T-cell (primary cell): ENCODE measurements at regions of chr7 and their contacts with region 1.

Region 1: GRCh38 chr7:24582166-24582565 is 8.9 kb downstream of the PALS2 start:
- DNase-seq: no peak
- ATAC-seq: no peak
- H3K4me3 ChIP-seq: no peak overlapping the region
- H3K4me3 Mint-ChIP-seq: no peak overlapping the region
- H3K27ac ChIP-seq: no peak overlapping the region
- H3K27ac Mint-ChIP-seq: no peak overlapping the region
- H3K4me1 ChIP-seq: no peaks in the 10 kb centered on the region
- H3K4me1 Mint-ChIP-seq: peaks cover 20 to 34% (median 21%) of the 10 kb centered on the region in 3 donors
- H3K27me3 ChIP-seq: no peaks in the 10 kb centered on the region
- H3K27me3 Mint-ChIP-seq: no peaks in the 10 kb centered on the region

Region 2: DNA sequence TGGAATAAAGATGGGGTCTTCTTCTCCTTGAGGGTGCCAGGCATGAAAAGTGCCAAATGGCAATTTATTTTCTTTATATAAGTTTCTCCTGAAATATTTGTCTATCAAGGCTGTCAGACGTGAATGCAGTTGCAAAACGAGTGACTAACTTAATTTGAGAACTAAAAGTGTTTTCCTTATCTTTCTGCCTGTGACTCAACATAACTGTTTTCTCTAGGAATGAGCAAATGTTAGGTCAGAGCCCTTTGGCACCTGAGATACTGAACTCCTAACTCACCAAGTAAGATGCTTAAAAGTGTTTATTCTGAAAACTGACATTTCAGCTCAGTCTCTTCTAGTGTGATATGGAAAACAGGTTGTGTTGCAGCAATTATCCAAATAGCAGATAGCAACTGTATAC is 675.2 kb before region 1 on chr7:
- CTCF ChIA-PET with region 1: no interaction called
- POLR2A ChIA-PET with region 1: interaction called in 1 of 2 experiments, 14 read pairs
- DNase-seq: no peak
- ATAC-seq: no peak
- H3K4me3 ChIP-seq: no peak overlapping the region
- H3K4me3 Mint-ChIP-seq: no peak overlapping the region
- H3K27ac ChIP-seq: no peak overlapping the region
- H3K27ac Mint-ChIP-seq: no peak overlapping the region
- H3K4me1 ChIP-seq: no peaks in the 10 kb centered on the region
- H3K4me1 Mint-ChIP-seq: no peaks in the 10 kb centered on the region
- H3K27me3 ChIP-seq: peaks cover 0 to 3% of the 10 kb centered on the region in 2 experiments
- H3K27me3 Mint-ChIP-seq: peaks cover 11 to 23% of the 10 kb centered on the region in 2 donors

Region 3: GRCh38 chr7:24560772-24561171 is 21.4 kb before region 1 on chr7:
- CTCF ChIA-PET with region 1: no interaction called
- POLR2A ChIA-PET with region 1: no interaction called
- DNase-seq: peak in 1 of 35 experiments; percentile 25
- ATAC-seq: peak; percentile 76 to 98 (median 95)
- H3K4me3 ChIP-seq: no peak overlapping the region
- H3K4me3 Mint-ChIP-seq: peak overlapping the region in 2 of 3 donors; percentile 14 to 37
- H3K27ac ChIP-seq: no peak overlapping the region
- H3K27ac Mint-ChIP-seq: peak overlapping the region; percentile 83 to 86
- H3K4me1 ChIP-seq: peaks cover 10 to 17% of the 10 kb centered on the region in 2 experiments
- H3K4me1 Mint-ChIP-seq: peaks cover 19 to 22% (median 21%) of the 10 kb centered on the region in 3 donors
- H3K27me3 ChIP-seq: no peaks in the 10 kb centered on the region
- H3K27me3 Mint-ChIP-seq: no peaks in the 10 kb centered on the region